ENCODE measurements at regions of chr7 and their contacts with region 1.

Region 1: GRCh38 chr7:107462740-107463444 is 7.0 kb upstream of the GPR22 start:
- DNase-seq: peak; percentile 22
- H3K4me3 Mint-ChIP-seq: no peak overlapping the region
- H3K27ac Mint-ChIP-seq: no peak overlapping the region
- H3K4me1 Mint-ChIP-seq: no peaks in the 10 kb centered on the region
- H3K27me3 Mint-ChIP-seq: no peaks in the 10 kb centered on the region

Region 2: DNA sequence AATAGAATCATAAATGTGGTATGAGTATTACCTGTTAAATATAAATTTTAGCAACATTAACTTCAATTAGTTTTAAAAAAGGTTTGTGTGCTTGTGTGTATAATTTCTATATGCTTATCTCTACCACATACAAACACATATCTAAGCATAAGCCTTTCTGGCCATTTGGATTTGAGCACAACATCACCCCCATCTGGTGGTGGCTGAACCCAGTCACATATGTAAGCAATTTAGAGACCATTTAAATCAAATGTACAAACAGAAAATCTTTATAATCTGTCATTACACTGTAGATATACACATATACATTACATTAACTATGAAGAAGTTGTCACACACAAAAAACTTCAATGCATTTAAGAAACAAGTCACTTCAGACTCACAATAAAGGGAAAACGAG is 38.7 kb after region 1 on chr7:
- intact Hi-C with region 1: loop called (anchors 5 kb)
- DNase-seq: no peak
- H3K4me3 Mint-ChIP-seq: no peak overlapping the region
- H3K27ac Mint-ChIP-seq: no peak overlapping the region
- H3K4me1 Mint-ChIP-seq: peaks cover 6% of the 10 kb centered on the region
- H3K27me3 Mint-ChIP-seq: no peaks in the 10 kb centered on the region

Region 3: GRCh38 chr7:107725151-107725740 is 262.4 kb after region 1 on chr7:
- intact Hi-C with region 1: loop called (anchors 1 kb)
- DNase-seq: peak; percentile 17
- H3K4me3 Mint-ChIP-seq: no peak overlapping the region
- H3K27ac Mint-ChIP-seq: no peak overlapping the region
- H3K4me1 Mint-ChIP-seq: no peaks in the 10 kb centered on the region
- H3K27me3 Mint-ChIP-seq: peaks cover 21% of the 10 kb centered on the region

Region 4: DNA sequence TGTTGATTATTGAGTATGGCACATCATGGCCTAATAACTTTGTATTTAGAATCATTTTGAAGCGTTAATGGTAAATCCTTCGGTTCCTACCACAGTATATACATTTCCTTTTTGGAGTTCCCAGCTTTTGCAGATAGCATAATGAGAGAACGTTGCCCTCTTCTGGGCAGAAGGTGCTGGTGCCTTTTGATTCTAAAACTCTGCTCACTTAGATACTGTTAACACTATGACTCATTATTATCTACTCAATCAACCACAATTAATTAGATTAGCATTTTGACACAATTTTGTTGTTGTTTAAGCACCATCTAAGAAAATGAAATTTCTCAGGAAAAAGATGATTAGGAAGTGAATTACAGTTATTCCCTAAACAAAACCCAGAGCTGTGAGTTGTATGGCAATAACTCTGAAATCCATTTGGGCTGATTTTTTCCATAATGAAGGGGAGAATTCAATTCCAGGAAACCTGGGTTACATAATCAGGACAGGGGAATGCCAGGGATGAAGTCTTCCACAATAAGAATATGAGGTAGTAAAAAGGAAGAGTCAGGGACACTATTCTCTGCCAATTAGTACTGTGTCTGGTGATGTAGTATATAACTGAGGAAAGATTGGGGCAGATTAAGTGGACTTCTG is 416.6 kb after region 1 on chr7:
- intact Hi-C with region 1: loop called (anchors 1 kb)
- DNase-seq: no peak
- H3K4me3 Mint-ChIP-seq: no peak overlapping the region
- H3K27ac Mint-ChIP-seq: no peak overlapping the region
- H3K4me1 Mint-ChIP-seq: peaks cover 27% of the 10 kb centered on the region
- H3K27me3 Mint-ChIP-seq: peaks cover 29% of the 10 kb centered on the region